A549 (cell line): ENCODE measurements at regions of chr1 and their contacts with region 1.

Region 1: DNA sequence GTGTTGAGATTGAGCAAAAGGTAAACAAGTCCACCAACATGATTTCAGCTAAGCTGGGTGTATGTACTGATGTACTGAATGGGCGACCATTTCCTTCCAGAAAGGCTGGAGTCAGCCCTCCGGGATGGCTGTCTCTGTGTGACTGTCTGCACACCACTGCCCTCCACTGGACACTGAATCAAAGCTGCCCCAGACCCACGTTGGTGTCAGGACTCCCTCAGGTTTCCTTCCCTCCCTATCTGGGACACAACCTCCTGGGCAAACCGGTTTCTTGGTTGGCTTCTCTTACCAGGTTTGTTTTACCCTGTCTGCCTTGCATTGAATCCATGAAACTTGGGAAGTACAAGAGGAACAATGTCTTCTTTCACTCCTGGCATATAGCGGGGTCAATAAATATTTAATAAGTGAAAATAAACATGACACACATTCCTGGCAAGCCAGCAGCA is 5.3 kb upstream of the SRP9 start:
- DNase-seq: peak; percentile 87 to 90
- ATAC-seq: peak; percentile 93 to 97
- H3K4me3 ChIP-seq: no peak overlapping the region
- H3K27ac ChIP-seq: peak overlapping the region; percentile 83 to 86
- H3K4me1 ChIP-seq: peaks cover 51% of the 10 kb centered on the region
- CTCF ChIP-seq: peak; percentile 95
- EP300 ChIP-seq: no peak
- POLR2A ChIP-seq: no peak
- RAD21 ChIP-seq: peak; percentile 99

Region 2: GRCh38 chr1:225548140-225548857 is 224.0 kb before region 1 on chr1:
- CTCF ChIA-PET with region 1: interaction called, 86 read pairs
- POLR2A ChIA-PET with region 1: interaction called, 3 read pairs
- DNase-seq: no peak
- ATAC-seq: no peak
- H3K4me3 ChIP-seq: no peak overlapping the region
- H3K27ac ChIP-seq: no peak overlapping the region
- H3K4me1 ChIP-seq: peaks cover 10% of the 10 kb centered on the region; the same call in 2 of the 3 replicates
- CTCF ChIP-seq: no peak
- EP300 ChIP-seq: no peak
- POLR2A ChIP-seq: no peak
- RAD21 ChIP-seq: no peak

Region 3: DNA sequence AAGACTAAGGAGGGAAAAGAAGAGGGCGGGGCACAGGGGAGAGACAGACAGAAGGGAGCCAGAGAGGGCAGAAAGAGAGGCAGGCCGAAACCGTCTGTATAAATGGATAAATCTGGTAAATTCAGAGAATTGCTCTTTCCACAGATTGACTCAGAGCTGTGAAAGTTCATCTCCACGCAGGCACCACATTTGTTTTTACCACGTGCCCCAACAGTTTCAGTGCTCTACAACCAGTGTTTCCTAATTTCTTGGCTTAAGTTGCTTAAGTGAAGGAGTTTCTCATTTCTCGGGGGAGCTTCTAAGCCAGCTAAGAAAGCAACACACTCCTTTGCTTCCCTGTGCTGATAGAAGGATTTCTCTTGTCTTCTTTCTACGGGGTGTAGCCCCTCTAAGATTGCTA is 206.5 kb before region 1 on chr1:
- CTCF ChIA-PET with region 1: interaction called, 14 read pairs
- POLR2A ChIA-PET with region 1: no interaction called
- DNase-seq: no peak
- ATAC-seq: peak in 1 of 2 experiments; percentile 45; a peak in 1 of 6 replicates
- H3K4me3 ChIP-seq: no peak overlapping the region
- H3K27ac ChIP-seq: no peak overlapping the region; a peak in 1 of 6 replicates
- H3K4me1 ChIP-seq: peaks cover 13% of the 10 kb centered on the region
- CTCF ChIP-seq: no peak
- EP300 ChIP-seq: no peak
- POLR2A ChIP-seq: no peak
- RAD21 ChIP-seq: no peak

Region 4: DNA sequence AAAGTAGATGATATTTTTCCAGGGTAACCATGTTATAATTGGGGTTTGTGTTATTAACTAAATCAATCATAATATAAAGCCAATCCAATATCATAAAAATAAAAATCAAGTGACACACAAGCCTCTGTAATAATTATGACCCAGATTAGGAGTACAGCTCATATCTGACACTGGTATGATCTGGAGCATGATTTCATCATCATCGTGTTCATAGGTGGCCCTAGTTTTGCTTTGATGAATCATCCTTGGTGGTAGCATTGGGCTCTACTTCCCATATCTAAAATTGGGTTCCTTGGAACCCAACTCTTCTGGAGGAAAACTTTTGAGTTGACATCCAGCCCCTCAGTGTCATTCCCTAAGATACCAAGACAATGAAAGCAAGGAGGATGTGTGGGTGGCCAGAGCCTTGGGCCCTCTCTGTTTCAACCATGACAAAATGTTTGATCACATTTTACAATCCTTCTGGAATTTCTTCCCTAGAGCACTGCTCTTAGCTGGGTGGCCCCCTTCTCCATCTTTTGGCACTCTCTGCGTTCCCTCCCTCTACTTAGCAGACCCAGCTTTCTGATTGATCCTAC is 82.4 kb before region 1 on chr1:
- CTCF ChIA-PET with region 1: interaction called, 10 read pairs
- POLR2A ChIA-PET with region 1: no interaction called
- DNase-seq: no peak
- ATAC-seq: no peak
- H3K4me3 ChIP-seq: no peak overlapping the region
- H3K27ac ChIP-seq: peak overlapping the region in 1 of 2 experiments; percentile 27; a peak in 4 of 6 replicates
- H3K4me1 ChIP-seq: peaks cover 35% of the 10 kb centered on the region
- CTCF ChIP-seq: no peak
- EP300 ChIP-seq: no peak
- POLR2A ChIP-seq: no peak
- RAD21 ChIP-seq: no peak

Region 5: GRCh38 chr1:225735252-225736149 is 36.8 kb before region 1 on chr1:
- CTCF ChIA-PET with region 1: interaction called, 54 read pairs
- POLR2A ChIA-PET with region 1: interaction called, 12 read pairs
- DNase-seq: peak; percentile 82 to 93
- ATAC-seq: peak; percentile 90 to 94
- H3K4me3 ChIP-seq: no peak overlapping the region
- H3K27ac ChIP-seq: peak overlapping the region; percentile 90 to 94
- H3K4me1 ChIP-seq: peaks cover 60% of the 10 kb centered on the region
- CTCF ChIP-seq: peak; percentile 14; the same call in 2 of the 3 replicates
- EP300 ChIP-seq: peak; percentile 68 to 84; a peak in 3 of 5 replicates
- POLR2A ChIP-seq: no peak
- RAD21 ChIP-seq: peak; percentile 53 to 58; a peak in 4 of 5 replicates

Region 6: DNA sequence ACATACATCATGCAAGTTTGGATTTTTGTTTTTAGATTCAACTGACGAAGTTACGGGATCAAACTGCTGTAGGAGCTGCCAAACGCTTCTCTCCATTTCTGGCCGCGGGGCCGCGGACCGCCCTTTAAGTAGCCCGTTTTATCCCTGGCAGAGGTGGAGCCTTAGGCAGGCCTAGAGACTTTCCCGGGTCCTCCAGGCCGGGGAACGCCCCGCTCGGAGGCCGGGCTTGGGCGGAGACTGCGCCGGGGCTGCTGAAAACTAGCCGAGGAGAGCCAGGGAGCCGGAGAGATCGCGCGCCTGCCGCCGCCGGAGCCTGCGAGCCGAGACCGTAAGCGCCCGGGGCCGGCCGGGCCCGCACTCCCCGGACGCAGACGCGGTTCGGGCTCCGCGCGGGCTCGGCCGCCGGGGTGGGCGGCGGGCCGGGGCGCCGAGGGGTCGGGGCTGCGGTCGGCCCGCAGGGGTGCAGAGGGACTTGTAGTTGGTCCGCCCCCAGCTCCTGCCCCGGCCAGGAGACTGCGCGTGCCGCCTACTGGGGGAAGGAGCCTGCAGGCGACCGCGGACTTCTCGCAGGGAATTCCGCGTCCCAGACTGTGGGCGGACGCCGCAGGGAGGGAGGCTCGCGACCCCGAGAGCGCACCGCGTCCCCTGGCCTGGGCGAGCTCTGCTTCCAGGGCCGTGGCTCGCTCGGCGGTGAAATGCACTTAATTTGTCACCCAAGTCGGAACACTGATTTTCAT is 37.7 kb after region 1 on chr1 and contains the start of gene EPHX1:
- CTCF ChIA-PET with region 1: interaction called, 55 read pairs
- POLR2A ChIA-PET with region 1: interaction called, 58 read pairs
- DNase-seq: peak; percentile 87 to 97
- ATAC-seq: peak; percentile 85 to 86
- H3K4me3 ChIP-seq: peak within 1 kb of the TSS; percentile 86
- H3K27ac ChIP-seq: peak within 1 kb of the TSS; percentile 93 to 99
- H3K4me1 ChIP-seq: peaks cover 40% of the 10 kb centered on the region
- CTCF ChIP-seq: peak; percentile 30; the same call in 2 of the 3 replicates
- EP300 ChIP-seq: 0 out of 5 replicates have a peak, but pooled peaks of 1 of the 2 experiments have one; percentile 8
- POLR2A ChIP-seq: peak; percentile 97
- RAD21 ChIP-seq: peak; percentile 25 to 37; a peak in 3 of 5 replicates
- polyA plus RNA-seq, gene EPHX1: 150 and 212 TPM in 2 replicates